IMR-90 (cell line): ENCODE measurements at regions of chr1 and their contacts with region 1.

Region 1: DNA sequence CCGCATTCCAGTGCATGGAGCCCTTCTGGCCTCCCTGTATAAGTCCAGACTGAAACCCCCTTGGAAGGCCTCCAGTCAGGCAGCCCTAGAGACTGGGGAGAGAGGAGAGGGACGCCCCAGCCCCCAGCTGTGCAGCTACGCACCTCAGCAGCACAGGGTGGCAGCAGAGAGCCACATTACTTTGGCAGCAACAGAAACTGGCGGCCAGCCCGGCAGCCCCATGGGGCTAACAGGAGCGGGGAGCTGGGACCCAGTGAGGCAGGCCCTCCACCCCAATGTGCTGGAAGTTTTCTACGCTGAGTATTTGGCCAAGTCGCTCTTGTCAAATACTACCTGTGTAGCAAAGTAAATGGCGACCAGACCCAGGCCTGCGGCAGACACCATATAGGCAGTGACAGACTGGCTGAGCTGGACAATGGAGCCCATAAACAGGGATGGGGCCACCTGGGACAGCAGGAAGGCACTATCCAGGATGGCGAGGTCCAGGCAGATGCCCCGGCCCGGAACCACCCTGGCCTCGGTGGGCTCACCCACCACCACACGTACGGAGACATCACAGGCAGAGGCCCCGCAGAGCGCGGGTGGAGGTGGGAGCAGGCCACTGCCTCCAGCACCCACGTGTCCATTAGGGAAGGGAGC is 21.2 kb downstream of the SLC45A3 start:
- DNase-seq: peak; percentile 53
- ATAC-seq: peak; percentile 88
- H3K4me3 ChIP-seq: no peak overlapping the region
- H3K27ac ChIP-seq: no peak overlapping the region
- H3K4me1 ChIP-seq: no peaks in the 10 kb centered on the region; the same call in 1 of the 2 replicates
- H3K27me3 ChIP-seq: no peaks in the 10 kb centered on the region
- CTCF ChIP-seq: peak; percentile 91
- POLR2A ChIP-seq: no peak
- RAD21 ChIP-seq: peak; percentile 89

Region 2: GRCh38 chr1:205485338-205486228 is 173.5 kb before region 1 on chr1:
- CTCF ChIA-PET with region 1: interaction called, 3 read pairs
- POLR2A ChIA-PET with region 1: no interaction called
- dilution Hi-C with region 1: no loop called
- in situ Hi-C with region 1: no loop called
- intact Hi-C with region 1: loop called (anchors 2 kb)
- DNase-seq: peak; percentile 59
- ATAC-seq: peak; percentile 95
- H3K4me3 ChIP-seq: no peak overlapping the region
- H3K27ac ChIP-seq: no peak overlapping the region
- H3K4me1 ChIP-seq: no peaks in the 10 kb centered on the region
- H3K27me3 ChIP-seq: peaks cover 46% of the 10 kb centered on the region
- CTCF ChIP-seq: peak; percentile 90
- POLR2A ChIP-seq: no peak
- RAD21 ChIP-seq: peak; percentile 92

Region 3: GRCh38 chr1:205591522-205592351 is 67.3 kb before region 1 on chr1:
- CTCF ChIA-PET with region 1: interaction called, 156 read pairs
- POLR2A ChIA-PET with region 1: interaction called, 5 read pairs
- dilution Hi-C with region 1: no loop called
- in situ Hi-C with region 1: loop called (anchors 5 kb)
- intact Hi-C with region 1: loop called (anchors 1 kb)
- DNase-seq: peak; percentile 74
- ATAC-seq: peak; percentile 97
- H3K4me3 ChIP-seq: peak overlapping the region; percentile 46
- H3K27ac ChIP-seq: peak overlapping the region; percentile 11; the same call in 1 of the 2 replicates
- H3K4me1 ChIP-seq: peaks cover 4% of the 10 kb centered on the region
- H3K27me3 ChIP-seq: no peaks in the 10 kb centered on the region
- CTCF ChIP-seq: peak; percentile 99
- POLR2A ChIP-seq: peak; percentile 55; the same call in 1 of the 2 replicates
- RAD21 ChIP-seq: peak; percentile 100

Region 4: GRCh38 chr1:205711104-205712020 is 52.3 kb after region 1 on chr1:
- CTCF ChIA-PET with region 1: interaction called, 53 read pairs
- POLR2A ChIA-PET with region 1: no interaction called
- dilution Hi-C with region 1: no loop called
- in situ Hi-C with region 1: no loop called
- intact Hi-C with region 1: loop called (anchors 1 kb)
- DNase-seq: peak; percentile 86
- ATAC-seq: peak; percentile 78
- H3K4me3 ChIP-seq: no peak overlapping the region
- H3K27ac ChIP-seq: no peak overlapping the region
- H3K4me1 ChIP-seq: peaks cover 8% of the 10 kb centered on the region
- H3K27me3 ChIP-seq: no peaks in the 10 kb centered on the region
- CTCF ChIP-seq: peak; percentile 93
- POLR2A ChIP-seq: no peak
- RAD21 ChIP-seq: peak; percentile 88

Region 5: GRCh38 chr1:205977402-205978014 is 318.4 kb after region 1 on chr1:
- CTCF ChIA-PET with region 1: interaction called, 20 read pairs
- POLR2A ChIA-PET with region 1: no interaction called
- dilution Hi-C with region 1: no loop called
- in situ Hi-C with region 1: loop called (anchors 10 kb)
- intact Hi-C with region 1: loop called (anchors 1 kb)
- DNase-seq: peak; percentile 81
- ATAC-seq: peak; percentile 90
- H3K4me3 ChIP-seq: no peak overlapping the region
- H3K27ac ChIP-seq: no peak overlapping the region
- H3K4me1 ChIP-seq: no peaks in the 10 kb centered on the region
- H3K27me3 ChIP-seq: no peaks in the 10 kb centered on the region
- CTCF ChIP-seq: peak; percentile 97
- POLR2A ChIP-seq: peak; percentile 56
- RAD21 ChIP-seq: peak; percentile 99

Region 6: GRCh38 chr1:206106328-206107167 is 447.5 kb after region 1 on chr1:
- CTCF ChIA-PET with region 1: no interaction called
- POLR2A ChIA-PET with region 1: no interaction called
- dilution Hi-C with region 1: no loop called
- in situ Hi-C with region 1: loop called (anchors 25 kb)
- intact Hi-C with region 1: loop called (anchors 10 kb)
- DNase-seq: peak; percentile 79
- ATAC-seq: peak; percentile 97
- H3K4me3 ChIP-seq: no peak overlapping the region
- H3K27ac ChIP-seq: no peak overlapping the region
- H3K4me1 ChIP-seq: no peaks in the 10 kb centered on the region
- H3K27me3 ChIP-seq: peaks cover 36% of the 10 kb centered on the region
- CTCF ChIP-seq: peak; percentile 92
- POLR2A ChIP-seq: no peak
- RAD21 ChIP-seq: peak; percentile 90